ENCODE measurements at regions of chr6 and their contacts with region 1.

Region 1: DNA sequence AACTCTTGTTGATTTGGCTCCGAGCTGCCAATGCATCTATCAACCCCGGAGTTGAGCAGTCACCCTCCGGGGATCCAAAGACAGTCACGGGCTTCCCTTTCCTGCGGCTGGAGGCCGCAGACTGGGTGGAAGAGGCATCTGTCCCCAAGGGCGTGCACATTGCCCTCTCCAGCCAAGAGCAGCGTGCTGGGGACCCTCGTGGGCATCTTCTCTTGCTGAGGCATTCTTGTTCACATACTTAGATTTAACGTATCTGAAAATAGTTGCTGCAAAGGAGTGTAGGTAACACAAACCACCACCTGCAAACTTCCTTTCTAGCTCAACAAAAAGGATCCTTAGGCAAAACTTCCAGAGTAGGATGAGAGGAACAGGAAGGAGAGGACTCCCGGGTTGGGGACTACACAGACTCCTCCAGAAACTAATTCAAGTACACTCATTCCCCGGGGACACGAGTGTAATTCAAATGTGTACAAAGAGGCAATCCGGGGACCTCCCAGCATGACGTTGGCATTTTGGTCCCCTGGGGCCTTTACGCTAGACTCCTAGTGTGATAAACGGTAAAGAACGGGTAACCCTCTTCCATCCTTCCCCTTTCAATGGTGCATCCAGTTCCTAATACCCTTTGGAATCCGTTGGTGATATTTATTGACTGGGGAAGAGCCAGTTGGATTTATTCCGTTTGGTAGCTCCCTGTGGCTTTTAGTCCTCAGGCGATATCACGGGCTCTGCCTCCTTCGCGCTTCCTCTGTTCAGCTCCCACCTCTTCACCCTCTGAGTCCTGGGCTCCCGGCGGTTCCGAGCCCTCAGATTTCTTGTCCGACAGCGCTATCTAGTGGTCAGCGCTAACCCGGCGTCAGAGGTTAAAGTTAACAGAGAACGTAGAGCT is 2.7 kb upstream of the COL12A1 start:
- DNase-seq: peak; percentile 42 to 88 (median 73)
- ATAC-seq: peak; percentile 81 to 87 (median 82)
- H3K4me3 ChIP-seq: peak overlapping the region; percentile 16 to 64
- H3K4me3 Mint-ChIP-seq: peak overlapping the region; percentile 53 to 72 (median 71)
- H3K27ac ChIP-seq: no peak overlapping the region
- H3K27ac Mint-ChIP-seq: peak overlapping the region in 1 of 2 donors; percentile 32
- H3K4me1 ChIP-seq: peaks cover 3 to 54% of the 10 kb centered on the region in 2 experiments
- H3K4me1 Mint-ChIP-seq: peaks cover 50 to 54% (median 52%) of the 10 kb centered on the region in 3 donors
- H3K27me3 ChIP-seq: peaks cover 9 to 61% of the 10 kb centered on the region in 2 experiments
- H3K27me3 Mint-ChIP-seq: peaks cover 63 to 67% of the 10 kb centered on the region in 2 donors

Region 2: DNA sequence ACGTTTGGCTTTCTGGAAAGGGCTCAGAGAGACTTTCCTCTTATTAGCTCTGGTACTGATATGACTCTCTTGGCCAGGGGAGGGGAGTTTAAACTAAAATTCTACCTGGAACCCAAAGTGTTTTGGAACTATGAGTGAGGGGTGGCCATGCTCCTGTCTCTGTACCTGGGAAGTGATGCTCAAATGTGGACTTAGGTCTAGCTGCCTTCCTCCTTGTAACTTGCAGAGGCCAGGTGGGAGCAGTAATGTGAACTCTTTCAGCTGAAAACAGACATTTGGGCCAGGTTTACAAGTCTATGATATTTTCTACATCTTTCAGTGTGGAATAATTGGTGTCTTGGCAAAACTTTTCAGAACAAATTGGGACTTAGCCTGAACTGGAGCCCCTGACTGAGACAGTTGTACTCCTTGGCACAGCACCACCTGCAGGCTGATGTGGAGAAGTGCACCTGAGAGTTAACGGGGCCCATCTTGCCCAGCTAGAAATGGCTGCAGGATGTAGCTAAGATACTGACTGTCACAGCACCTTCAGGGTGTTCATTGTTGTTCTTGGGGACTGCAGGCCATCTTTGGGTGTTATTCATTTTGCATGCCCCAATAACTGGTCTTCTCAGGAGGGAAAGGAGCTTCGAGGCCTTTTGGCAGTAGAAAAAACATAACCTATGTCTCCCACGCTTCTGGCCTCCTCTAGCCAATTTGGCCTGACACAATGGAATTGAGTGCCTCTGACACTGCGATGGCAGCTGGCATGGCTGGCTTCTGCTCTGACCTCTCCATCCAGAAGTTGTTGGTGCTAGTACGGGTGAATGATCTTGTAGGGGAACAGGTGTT is 1475.5 kb before region 1 on chr6:
- CTCF ChIA-PET with region 1: interaction called, 117 to 213 read pairs
- POLR2A ChIA-PET with region 1: interaction called in 1 of 2 experiments, 5 read pairs
- DNase-seq: peak; percentile 16 to 81 (median 54)
- ATAC-seq: peak; percentile 90 to 98 (median 96)
- H3K4me3 ChIP-seq: no peak overlapping the region
- H3K4me3 Mint-ChIP-seq: no peak overlapping the region
- H3K27ac ChIP-seq: no peak overlapping the region
- H3K27ac Mint-ChIP-seq: no peak overlapping the region
- H3K4me1 ChIP-seq: no peaks in the 10 kb centered on the region
- H3K4me1 Mint-ChIP-seq: no peaks in the 10 kb centered on the region
- H3K27me3 ChIP-seq: no peaks in the 10 kb centered on the region
- H3K27me3 Mint-ChIP-seq: no peaks in the 10 kb centered on the region

Region 3: DNA sequence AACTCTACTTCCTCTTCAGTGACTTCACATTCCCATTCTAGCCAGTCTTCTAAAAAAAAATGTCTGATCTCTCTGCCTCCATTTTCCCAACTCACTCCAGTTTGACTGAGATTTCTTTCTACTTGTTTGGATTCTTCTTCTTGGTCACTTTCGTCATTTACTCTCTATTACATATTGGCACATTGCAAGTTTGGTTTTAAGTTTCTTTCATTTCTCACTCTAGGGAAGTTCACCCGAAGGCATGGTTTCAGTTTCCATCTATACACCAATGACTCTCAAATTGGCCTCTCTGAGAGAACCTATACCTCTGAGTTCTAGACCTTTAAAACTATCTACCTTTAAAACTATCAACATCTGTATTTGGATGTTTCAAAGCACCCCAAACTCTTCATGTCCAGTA is 1461.3 kb before region 1 on chr6:
- CTCF ChIA-PET with region 1: interaction called, 10 to 213 read pairs
- POLR2A ChIA-PET with region 1: no interaction called
- DNase-seq: peak in 1 of 35 experiments; percentile 11
- ATAC-seq: peak in 3 of 4 experiments; percentile 40 to 51 (median 43)
- H3K4me3 ChIP-seq: no peak overlapping the region
- H3K4me3 Mint-ChIP-seq: no peak overlapping the region
- H3K27ac ChIP-seq: no peak overlapping the region
- H3K27ac Mint-ChIP-seq: no peak overlapping the region
- H3K4me1 ChIP-seq: no peaks in the 10 kb centered on the region
- H3K4me1 Mint-ChIP-seq: peaks cover 0 to 2% (median 0%) of the 10 kb centered on the region in 3 donors
- H3K27me3 ChIP-seq: no peaks in the 10 kb centered on the region
- H3K27me3 Mint-ChIP-seq: no peaks in the 10 kb centered on the region

Region 4: DNA sequence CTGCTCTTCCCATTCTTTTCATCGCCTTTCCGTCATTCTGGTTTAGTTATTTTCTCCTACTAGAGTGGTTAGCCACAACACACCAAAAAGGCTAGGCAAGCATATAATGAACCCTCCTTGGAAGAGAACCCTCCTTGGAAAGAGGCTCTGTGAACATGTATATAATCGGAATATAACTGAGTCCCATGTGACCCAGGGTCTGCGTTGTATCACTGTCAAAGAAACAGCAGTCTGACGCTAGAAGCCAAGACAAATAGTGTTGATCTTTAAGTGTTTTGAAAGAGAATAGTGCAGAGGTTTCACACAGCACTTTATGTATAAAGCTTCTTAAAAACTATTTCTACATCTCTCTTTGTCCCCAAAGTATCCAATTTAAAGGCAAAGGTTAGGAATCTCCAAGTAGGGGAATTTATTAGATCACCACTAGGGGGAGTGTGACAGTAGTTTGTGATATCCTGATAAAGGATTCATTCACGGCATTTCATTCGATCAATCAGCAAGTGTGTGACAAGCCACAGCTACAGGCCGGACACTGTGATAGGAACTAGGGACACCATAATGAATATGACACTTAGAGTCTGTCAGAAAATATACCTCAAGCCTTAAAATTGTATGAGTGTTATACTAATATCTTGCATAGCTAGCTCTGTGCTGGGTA is 1117.3 kb before region 1 on chr6:
- CTCF ChIA-PET with region 1: interaction called, 9 to 20 read pairs
- POLR2A ChIA-PET with region 1: no interaction called
- DNase-seq: peak in 1 of 35 experiments; percentile 25
- ATAC-seq: no peak
- H3K4me3 ChIP-seq: no peak overlapping the region
- H3K4me3 Mint-ChIP-seq: no peak overlapping the region
- H3K27ac ChIP-seq: no peak overlapping the region
- H3K27ac Mint-ChIP-seq: no peak overlapping the region
- H3K4me1 ChIP-seq: no peaks in the 10 kb centered on the region
- H3K4me1 Mint-ChIP-seq: no peaks in the 10 kb centered on the region
- H3K27me3 ChIP-seq: no peaks in the 10 kb centered on the region
- H3K27me3 Mint-ChIP-seq: no peaks in the 10 kb centered on the region

Region 5: GRCh38 chr6:75249837-75250236 is 41.3 kb after region 1 on chr6:
- CTCF ChIA-PET with region 1: no interaction called
- POLR2A ChIA-PET with region 1: no interaction called
- DNase-seq: no peak
- ATAC-seq: no peak
- H3K4me3 ChIP-seq: no peak overlapping the region
- H3K4me3 Mint-ChIP-seq: no peak overlapping the region
- H3K27ac ChIP-seq: no peak overlapping the region
- H3K27ac Mint-ChIP-seq: no peak overlapping the region
- H3K4me1 ChIP-seq: no peaks in the 10 kb centered on the region
- H3K4me1 Mint-ChIP-seq: peaks cover 0 to 4% (median 2%) of the 10 kb centered on the region in 3 donors
- H3K27me3 ChIP-seq: peaks cover 0 to 5% of the 10 kb centered on the region in 2 experiments
- H3K27me3 Mint-ChIP-seq: peaks cover 7 to 11% of the 10 kb centered on the region in 2 donors

Region 6: DNA sequence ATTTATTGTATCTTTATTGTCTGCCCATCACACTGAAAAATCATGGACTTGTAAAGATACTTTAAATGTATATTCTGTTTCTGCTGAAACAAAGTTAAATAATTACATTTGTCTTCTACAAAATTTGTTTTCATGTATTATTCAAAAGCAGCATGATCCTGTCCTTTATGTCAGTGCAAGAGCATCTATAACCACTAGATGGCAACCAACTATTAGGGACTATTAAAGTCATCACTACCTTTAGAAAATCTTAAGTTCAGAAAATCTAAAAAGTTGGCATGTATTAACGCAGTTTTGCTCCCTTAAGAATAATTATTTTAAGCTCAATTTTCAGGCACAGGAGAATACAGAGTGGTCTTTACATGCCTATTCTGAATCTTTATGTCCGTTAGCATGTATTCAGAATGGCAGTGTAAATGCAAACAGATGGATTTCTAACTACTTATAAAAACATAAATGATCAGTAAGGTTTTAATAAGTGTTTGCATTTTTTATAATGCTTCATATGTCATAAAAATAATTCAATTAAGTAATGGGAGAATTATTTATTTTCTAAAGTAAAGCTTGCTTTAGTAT is 58.3 kb after region 1 on chr6:
- CTCF ChIA-PET with region 1: no interaction called
- POLR2A ChIA-PET with region 1: no interaction called
- DNase-seq: peak in 2 of 35 experiments; percentile 2 to 64
- ATAC-seq: peak in 3 of 4 experiments; percentile 48 to 75 (median 57)
- H3K4me3 ChIP-seq: no peak overlapping the region
- H3K4me3 Mint-ChIP-seq: no peak overlapping the region
- H3K27ac ChIP-seq: no peak overlapping the region
- H3K27ac Mint-ChIP-seq: no peak overlapping the region
- H3K4me1 ChIP-seq: no peaks in the 10 kb centered on the region
- H3K4me1 Mint-ChIP-seq: peaks cover 13 to 45% (median 41%) of the 10 kb centered on the region in 3 donors
- H3K27me3 ChIP-seq: no peaks in the 10 kb centered on the region
- H3K27me3 Mint-ChIP-seq: no peaks in the 10 kb centered on the region